Posterior vena cava (tissue), 2 donors: ENCODE measurements at regions of chr1 and their contacts with region 1.

Region 1: GRCh38 chr1:77888081-77888780 is at the start of gene NEXN:
- DNase-seq: peak; percentile 94
- total RNA-seq, gene NEXN: 111 to 202 TPM

Region 2: DNA sequence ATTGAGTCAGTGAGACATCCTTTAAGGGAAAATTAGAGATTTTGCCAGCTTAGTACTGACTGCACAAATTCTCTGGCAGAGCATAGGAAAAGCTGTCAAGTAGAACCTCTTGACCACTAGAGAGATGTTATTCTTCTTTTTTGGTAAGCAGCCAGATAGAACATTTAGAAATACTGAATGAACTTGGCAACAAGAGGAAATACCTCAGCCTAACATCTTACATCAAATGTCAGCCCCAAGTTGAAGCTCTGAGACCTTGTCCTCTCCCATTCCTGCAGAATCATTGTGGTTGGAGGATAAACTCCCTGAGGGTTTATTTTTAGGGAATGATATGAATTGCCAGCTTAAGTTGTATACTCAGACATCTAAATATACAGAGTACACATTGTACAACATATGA is 55.3 kb before region 1 on chr1:
- intact Hi-C with region 1: loop called in 1 of 2 experiments (anchors 5 kb)
- DNase-seq: no peak

Region 3: GRCh38 chr1:77940921-77941570 is 52.8 kb after region 1 on chr1:
- intact Hi-C with region 1: no loop called
- DNase-seq: no peak